ENCODE measurements at regions of chr20 and their contacts with region 1.

Region 1: GRCh38 chr20:24007073-24007595 is 18.6 kb upstream of the GGTLC1 start:
- DNase-seq: no peak
- ATAC-seq: no peak
- H3K4me3 ChIP-seq: no peak overlapping the region
- H3K27ac ChIP-seq: no peak overlapping the region
- H3K4me1 ChIP-seq: no peaks in the 10 kb centered on the region
- H3K27me3 ChIP-seq: peaks cover 0 to 2% of the 10 kb centered on the region in 2 experiments; a peak in 1 of 4 replicates
- CTCF ChIP-seq: no peak
- EP300 ChIP-seq: no peak
- POLR2A ChIP-seq: no peak
- RAD21 ChIP-seq: no peak

Region 2: DNA sequence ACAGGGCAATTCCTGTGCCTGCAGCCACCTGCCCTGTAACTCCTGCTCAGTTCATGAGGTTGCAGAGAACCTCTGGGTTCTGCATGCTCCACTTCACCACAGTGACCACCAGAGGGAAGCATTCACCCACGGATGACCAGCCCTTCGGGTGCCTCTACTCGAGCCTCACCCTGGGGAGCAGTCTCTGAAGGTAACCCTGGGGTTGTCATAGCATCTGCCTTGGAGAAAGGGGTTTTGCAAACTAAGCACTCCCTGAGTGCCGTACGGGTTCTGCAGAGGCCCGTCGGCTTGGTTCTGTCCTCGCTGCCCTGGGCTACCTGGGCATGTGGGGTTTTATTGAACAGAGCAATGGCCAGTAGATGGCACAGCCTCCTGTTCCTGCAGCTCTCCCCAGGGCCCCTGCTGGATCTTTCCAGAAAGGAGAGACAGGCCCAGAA is 117.3 kb before region 1 on chr20:
- CTCF ChIA-PET with region 1: interaction called, 3 read pairs
- POLR2A ChIA-PET with region 1: no interaction called
- RAD21 ChIA-PET with region 1: no interaction called
- SMC1A ChIA-PET with region 1: no interaction called
- in situ Hi-C with region 1: loop called (anchors 5 kb)
- intact Hi-C with region 1: no loop called
- DNase-seq: no peak
- ATAC-seq: peak; percentile 97
- H3K4me3 ChIP-seq: no peak overlapping the region
- H3K27ac ChIP-seq: no peak overlapping the region
- H3K4me1 ChIP-seq: no peaks in the 10 kb centered on the region
- H3K27me3 ChIP-seq: no peaks in the 10 kb centered on the region
- CTCF ChIP-seq: peak; percentile 65 to 74 (median 71)
- EP300 ChIP-seq: no peak
- POLR2A ChIP-seq: no peak
- RAD21 ChIP-seq: peak; percentile 75

Region 3: DNA sequence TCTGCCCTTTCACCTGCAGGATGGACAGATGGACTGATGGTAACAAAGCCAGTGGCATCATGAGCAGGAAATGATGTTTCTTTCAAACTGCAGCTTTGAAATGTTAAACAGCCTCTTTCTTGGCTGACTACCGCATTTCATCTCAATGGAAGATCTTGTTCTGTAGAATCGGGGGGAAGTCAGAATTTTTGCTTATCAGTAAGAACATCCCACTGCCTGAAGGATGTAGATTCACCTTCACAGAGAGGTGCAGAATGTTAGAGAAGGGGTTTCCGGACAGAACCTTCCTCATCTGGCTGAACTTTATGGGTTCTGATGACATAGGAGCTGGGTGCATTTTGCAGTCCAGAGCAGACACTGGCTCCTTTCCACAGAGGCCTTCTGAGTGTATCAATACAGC is 51.2 kb before region 1 on chr20:
- CTCF ChIA-PET with region 1: no interaction called
- POLR2A ChIA-PET with region 1: no interaction called
- RAD21 ChIA-PET with region 1: no interaction called
- SMC1A ChIA-PET with region 1: no interaction called
- in situ Hi-C with region 1: loop called (anchors 5 kb)
- intact Hi-C with region 1: no loop called
- DNase-seq: no peak
- ATAC-seq: no peak
- H3K4me3 ChIP-seq: no peak overlapping the region
- H3K27ac ChIP-seq: no peak overlapping the region
- H3K4me1 ChIP-seq: no peaks in the 10 kb centered on the region
- H3K27me3 ChIP-seq: no peaks in the 10 kb centered on the region
- CTCF ChIP-seq: no peak
- EP300 ChIP-seq: no peak
- POLR2A ChIP-seq: no peak
- RAD21 ChIP-seq: no peak

Region 4: GRCh38 chr20:24118441-24119175 is 111.5 kb after region 1 on chr20:
- CTCF ChIA-PET with region 1: no interaction called
- POLR2A ChIA-PET with region 1: no interaction called
- RAD21 ChIA-PET with region 1: no interaction called
- SMC1A ChIA-PET with region 1: no interaction called
- in situ Hi-C with region 1: no loop called
- intact Hi-C with region 1: no loop called
- DNase-seq: no peak
- ATAC-seq: no peak
- H3K4me3 ChIP-seq: no peak overlapping the region
- H3K27ac ChIP-seq: no peak overlapping the region
- H3K4me1 ChIP-seq: no peaks in the 10 kb centered on the region
- H3K27me3 ChIP-seq: peaks cover 0 to 3% of the 10 kb centered on the region in 2 experiments; a peak in 3 of 4 replicates
- CTCF ChIP-seq: no peak
- EP300 ChIP-seq: no peak
- POLR2A ChIP-seq: no peak
- RAD21 ChIP-seq: no peak